ENCODE measurements at regions of chr4 and their contacts with region 1.

Region 1: DNA sequence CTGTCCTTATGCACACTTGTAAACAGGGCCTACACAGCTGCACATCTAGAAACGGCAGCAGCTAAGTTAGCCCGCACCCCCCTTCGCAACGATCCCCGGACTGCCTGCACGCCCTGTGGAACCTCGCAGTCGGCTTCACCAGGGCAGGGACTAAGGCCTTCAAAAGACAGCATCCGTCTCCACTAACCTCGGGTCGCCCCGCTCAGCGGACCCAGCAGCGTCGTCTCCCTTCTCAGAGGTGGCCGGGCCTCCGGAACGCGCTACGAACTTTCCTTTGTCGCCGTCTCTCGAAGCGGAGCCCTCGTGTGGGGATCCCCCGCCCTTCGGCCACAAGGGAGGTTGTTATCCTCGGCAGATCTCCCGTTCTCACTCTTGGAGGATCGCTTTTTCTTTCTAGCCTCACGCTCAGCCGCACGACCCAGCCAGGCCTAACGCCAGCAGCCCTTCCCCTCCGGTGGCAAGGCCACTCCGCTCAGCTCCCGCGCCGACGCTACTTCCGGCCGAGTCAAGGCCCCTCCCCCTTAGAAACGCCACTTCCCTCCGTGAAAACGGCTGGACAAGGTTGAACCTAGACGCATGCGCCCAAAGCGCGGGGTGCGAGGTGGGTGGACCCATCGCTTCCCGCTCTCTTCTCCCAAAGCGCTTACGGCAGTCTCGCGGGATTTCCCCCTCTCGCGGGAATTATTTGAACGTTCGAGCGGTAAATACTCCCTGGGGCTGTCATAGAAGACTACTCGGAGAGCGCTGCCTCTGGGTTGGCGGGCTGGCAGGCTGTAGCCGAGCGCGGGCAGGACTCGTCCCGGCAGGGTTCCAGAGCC is at the starts of genes DCAF16 and NCAPG:
- H3K4me3 Mint-ChIP-seq: peak within 1 kb of the TSS; percentile 91
- H3K27ac Mint-ChIP-seq: peak within 1 kb of the TSS; percentile 94
- H3K4me1 Mint-ChIP-seq: peaks cover 56% of the 10 kb centered on the region
- H3K27me3 Mint-ChIP-seq: no peaks in the 10 kb centered on the region

Region 2: GRCh38 chr4:17535906-17536305 is 274.6 kb before region 1 on chr4:
- intact Hi-C with region 1: no loop called
- H3K4me3 Mint-ChIP-seq: no peak overlapping the region
- H3K27ac Mint-ChIP-seq: no peak overlapping the region
- H3K4me1 Mint-ChIP-seq: no peaks in the 10 kb centered on the region
- H3K27me3 Mint-ChIP-seq: peaks cover 2% of the 10 kb centered on the region

Region 3: GRCh38 chr4:17576932-17577665 is 233.4 kb before region 1 on chr4 and contains the start of gene LAP3:
- intact Hi-C with region 1: loop called (anchors 2 kb)
- H3K4me3 Mint-ChIP-seq: peak within 1 kb of the TSS; percentile 97
- H3K27ac Mint-ChIP-seq: peak within 1 kb of the TSS; percentile 98
- H3K4me1 Mint-ChIP-seq: peaks cover 43% of the 10 kb centered on the region
- H3K27me3 Mint-ChIP-seq: no peaks in the 10 kb centered on the region

Region 4: GRCh38 chr4:17614416-17615299 is 195.8 kb before region 1 on chr4 and contains the start of gene MED28:
- intact Hi-C with region 1: loop called (anchors 10 kb)
- H3K4me3 Mint-ChIP-seq: peak within 1 kb of the TSS; percentile 91
- H3K27ac Mint-ChIP-seq: peak within 1 kb of the TSS; percentile 98
- H3K4me1 Mint-ChIP-seq: peaks cover 37% of the 10 kb centered on the region
- H3K27me3 Mint-ChIP-seq: no peaks in the 10 kb centered on the region

Region 5: GRCh38 chr4:17636696-17637622 is 173.5 kb before region 1 on chr4:
- intact Hi-C with region 1: loop called (anchors 5 kb)
- H3K4me3 Mint-ChIP-seq: no peak overlapping the region
- H3K27ac Mint-ChIP-seq: no peak overlapping the region
- H3K4me1 Mint-ChIP-seq: peaks cover 11% of the 10 kb centered on the region
- H3K27me3 Mint-ChIP-seq: no peaks in the 10 kb centered on the region

Region 6: GRCh38 chr4:18021722-18022571 is 211.5 kb after region 1 on chr4 and contains the start of gene LCORL:
- intact Hi-C with region 1: loop called (anchors 1 kb)
- H3K4me3 Mint-ChIP-seq: peak within 1 kb of the TSS; percentile 90
- H3K27ac Mint-ChIP-seq: peak within 1 kb of the TSS; percentile 99
- H3K4me1 Mint-ChIP-seq: peaks cover 15% of the 10 kb centered on the region
- H3K27me3 Mint-ChIP-seq: peaks cover 15% of the 10 kb centered on the region